ENCODE measurements at regions of chr17 and their contacts with region 1.

Region 1: GRCh38 chr17:57255776-57256681 is at the start of gene MSI2:
- DNase-seq: peak; percentile 76
- H3K4me3 ChIP-seq: peak within 1 kb of the TSS; percentile 65 to 99 (median 68)
- H3K27ac ChIP-seq: peak within 1 kb of the TSS; percentile 61
- H3K4me1 ChIP-seq: peaks cover 18% of the 10 kb centered on the region
- H3K27me3 ChIP-seq: no peaks in the 10 kb centered on the region
- CTCF ChIP-seq: no peak
- total RNA-seq, gene MSI2: 56.5 to 57.0 TPM

Region 2: GRCh38 chr17:57228911-57229310 is 27.1 kb before region 1 on chr17:
- CTCF ChIA-PET with region 1: no interaction called
- dilution Hi-C with region 1: no loop called
- in situ Hi-C with region 1: no loop called
- intact Hi-C with region 1: no loop called
- DNase-seq: no peak
- H3K4me3 ChIP-seq: no peak overlapping the region
- H3K27ac ChIP-seq: no peak overlapping the region
- H3K4me1 ChIP-seq: no peaks in the 10 kb centered on the region
- H3K27me3 ChIP-seq: no peaks in the 10 kb centered on the region
- CTCF ChIP-seq: no peak

Region 3: GRCh38 chr17:57243171-57243948 is 12.7 kb before region 1 on chr17:
- CTCF ChIA-PET with region 1: interaction called, 13 read pairs
- dilution Hi-C with region 1: no loop called
- in situ Hi-C with region 1: no loop called
- intact Hi-C with region 1: no loop called
- DNase-seq: peak; percentile 45
- H3K4me3 ChIP-seq: no peak overlapping the region
- H3K27ac ChIP-seq: no peak overlapping the region
- H3K4me1 ChIP-seq: no peaks in the 10 kb centered on the region
- H3K27me3 ChIP-seq: no peaks in the 10 kb centered on the region
- CTCF ChIP-seq: peak; percentile 100

Region 4: DNA sequence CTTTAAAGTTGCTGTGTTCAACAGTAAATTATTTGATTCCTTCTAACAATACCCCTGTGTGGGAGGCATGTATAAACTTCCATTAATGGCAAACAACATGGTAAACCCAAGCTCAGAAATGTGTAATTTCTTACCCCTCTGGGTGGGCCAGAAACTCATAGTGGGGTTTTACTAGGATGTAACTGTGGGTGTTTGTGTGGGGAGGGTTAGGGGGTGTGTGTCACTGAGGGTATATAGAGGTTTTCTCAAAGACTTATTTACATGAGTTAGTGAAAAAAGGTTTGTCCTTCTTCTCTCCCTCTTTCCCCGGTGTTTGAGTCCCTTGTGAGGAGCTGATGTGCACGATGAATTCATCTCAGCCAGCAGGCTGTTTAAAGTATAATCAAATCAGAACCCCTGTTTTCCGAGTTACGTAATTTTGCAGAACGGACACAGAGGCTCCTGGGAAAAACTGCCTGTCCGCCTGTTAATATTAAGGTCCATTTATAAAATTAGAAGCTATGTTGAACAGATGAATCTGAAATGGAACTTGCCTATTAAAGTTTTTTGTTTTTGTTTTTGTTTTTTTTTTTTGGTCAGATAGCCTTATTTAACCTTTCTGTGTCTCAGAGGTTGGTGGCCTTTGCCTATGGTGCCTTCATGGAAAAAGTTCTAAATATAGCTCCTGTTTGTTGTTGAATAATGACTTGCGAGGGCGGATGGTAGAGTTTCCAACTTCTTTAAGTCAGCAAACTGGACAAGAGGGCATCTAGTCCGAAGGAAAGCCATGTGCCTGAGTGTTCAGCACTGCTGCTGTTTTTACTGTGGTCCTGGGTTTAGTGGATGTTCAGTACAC is 73.6 kb after region 1 on chr17:
- CTCF ChIA-PET with region 1: no interaction called
- dilution Hi-C with region 1: no loop called
- in situ Hi-C with region 1: no loop called
- intact Hi-C with region 1: no loop called
- DNase-seq: no peak
- H3K4me3 ChIP-seq: no peak overlapping the region
- H3K27ac ChIP-seq: no peak overlapping the region
- H3K4me1 ChIP-seq: no peaks in the 10 kb centered on the region
- H3K27me3 ChIP-seq: no peaks in the 10 kb centered on the region
- CTCF ChIP-seq: no peak

Region 5: GRCh38 chr17:57357399-57357807 is 101.4 kb after region 1 on chr17:
- CTCF ChIA-PET with region 1: no interaction called
- dilution Hi-C with region 1: no loop called
- in situ Hi-C with region 1: no loop called
- intact Hi-C with region 1: loop called (anchors 5 kb)
- DNase-seq: peak; percentile 47
- H3K4me3 ChIP-seq: no peak overlapping the region
- H3K27ac ChIP-seq: peak overlapping the region; percentile 1
- H3K4me1 ChIP-seq: peaks cover 19% of the 10 kb centered on the region
- H3K27me3 ChIP-seq: no peaks in the 10 kb centered on the region
- CTCF ChIP-seq: no peak

Region 6: GRCh38 chr17:57401556-57402488 is 145.8 kb after region 1 on chr17:
- CTCF ChIA-PET with region 1: no interaction called
- dilution Hi-C with region 1: no loop called
- in situ Hi-C with region 1: no loop called
- intact Hi-C with region 1: loop called (anchors 5 kb)
- DNase-seq: no peak
- H3K4me3 ChIP-seq: no peak overlapping the region
- H3K27ac ChIP-seq: no peak overlapping the region
- H3K4me1 ChIP-seq: no peaks in the 10 kb centered on the region
- H3K27me3 ChIP-seq: no peaks in the 10 kb centered on the region
- CTCF ChIP-seq: peak; percentile 3 to 19

Region 7: DNA sequence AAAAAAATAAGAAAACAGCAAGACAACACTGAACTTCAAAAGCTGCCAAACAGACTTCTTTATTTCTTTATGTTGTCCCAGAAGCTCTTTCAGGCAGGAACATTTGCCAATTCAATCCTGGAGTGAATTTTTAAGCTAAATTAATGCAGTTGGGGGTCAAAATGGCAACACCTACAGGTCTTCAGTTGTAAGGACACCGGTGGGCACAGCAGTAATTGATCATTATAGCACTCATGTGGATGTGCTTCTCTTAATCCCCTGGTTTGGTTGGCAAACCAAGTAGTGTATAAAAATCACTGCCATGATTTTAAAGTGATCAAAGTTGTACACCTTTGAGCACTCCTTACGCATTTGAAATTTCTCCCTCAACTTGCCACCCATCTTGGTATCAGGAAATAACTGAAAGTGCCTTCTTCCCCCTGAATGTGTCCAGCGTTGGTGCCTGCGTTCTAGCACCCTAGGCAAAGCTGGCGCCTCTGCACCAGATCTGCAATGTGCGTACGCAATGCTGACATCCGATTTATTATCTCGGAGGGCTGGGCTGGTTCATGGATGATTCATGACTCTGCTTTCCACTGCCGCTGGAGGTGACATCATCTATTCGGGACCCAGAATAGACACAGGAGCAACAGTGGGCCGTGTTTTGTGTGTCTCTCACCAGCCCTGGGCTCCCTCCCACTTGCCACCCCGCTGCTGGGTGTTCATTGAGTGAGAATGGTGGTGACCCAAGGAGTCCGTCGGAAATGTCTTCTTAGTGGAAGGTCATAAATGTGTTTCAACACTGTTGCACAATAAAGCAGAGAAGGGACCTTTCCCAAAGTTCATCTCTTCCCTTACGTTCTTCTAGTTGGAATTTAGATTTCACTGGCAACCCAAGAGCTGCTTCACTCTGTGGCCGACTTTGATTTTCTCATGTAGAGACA is 285.7 kb after region 1 on chr17:
- CTCF ChIA-PET with region 1: no interaction called
- dilution Hi-C with region 1: no loop called
- in situ Hi-C with region 1: loop called in 1 of 2 experiments (anchors 25 kb)
- intact Hi-C with region 1: no loop called
- DNase-seq: no peak
- H3K4me3 ChIP-seq: no peak overlapping the region
- H3K27ac ChIP-seq: no peak overlapping the region
- H3K4me1 ChIP-seq: no peaks in the 10 kb centered on the region
- H3K27me3 ChIP-seq: no peaks in the 10 kb centered on the region
- CTCF ChIP-seq: no peak

Region 8: GRCh38 chr17:57597531-57598453 is 341.8 kb after region 1 on chr17:
- CTCF ChIA-PET with region 1: no interaction called
- dilution Hi-C with region 1: no loop called
- in situ Hi-C with region 1: no loop called
- intact Hi-C with region 1: loop called (anchors 5 kb)
- DNase-seq: peak; percentile 49
- H3K4me3 ChIP-seq: no peak overlapping the region
- H3K27ac ChIP-seq: no peak overlapping the region
- H3K4me1 ChIP-seq: peaks cover 2% of the 10 kb centered on the region
- H3K27me3 ChIP-seq: no peaks in the 10 kb centered on the region
- CTCF ChIP-seq: peak; percentile 83 to 85

Region 9: DNA sequence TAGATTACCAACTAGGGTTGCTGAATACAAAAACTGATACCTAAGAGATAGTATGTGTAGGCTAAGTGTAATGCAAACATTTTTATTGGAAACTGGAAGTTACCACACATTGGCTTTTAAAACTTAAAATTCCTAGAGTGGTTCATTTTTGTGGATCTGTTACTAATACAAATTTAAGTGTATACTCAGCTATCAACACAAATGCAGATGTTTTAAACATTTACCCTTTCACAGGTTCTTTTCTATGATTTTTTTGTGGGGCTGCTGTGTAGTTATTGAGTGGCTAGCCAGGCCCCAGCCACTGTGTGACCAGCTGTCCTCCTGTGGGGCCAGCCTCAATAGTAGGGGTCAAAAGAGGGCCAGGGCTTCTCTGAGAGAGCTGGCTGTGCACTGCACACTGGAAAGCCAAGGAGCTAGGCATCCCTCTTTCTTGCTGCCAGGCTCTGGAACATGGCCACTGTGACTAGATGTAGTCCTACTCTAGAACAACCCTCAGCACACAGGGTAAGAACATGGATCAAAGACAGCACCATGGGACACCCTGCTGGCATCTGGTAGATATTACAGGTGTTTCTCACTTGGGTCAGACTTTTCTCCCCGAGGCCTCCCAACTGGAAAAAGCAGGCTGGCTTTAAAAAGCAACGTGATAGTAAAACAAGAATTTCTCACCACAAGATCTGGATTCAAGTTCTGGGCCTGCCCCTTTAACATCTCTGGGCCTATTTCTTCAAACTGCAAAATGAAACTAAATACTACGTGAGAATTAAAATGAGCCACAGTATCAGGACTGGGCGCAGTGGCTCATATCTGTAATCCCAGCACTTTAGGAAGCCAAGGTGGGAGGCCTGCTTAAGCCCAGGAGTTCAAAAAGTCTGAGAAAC is 739.3 kb after region 1 on chr17:
- CTCF ChIA-PET with region 1: no interaction called
- dilution Hi-C with region 1: no loop called
- in situ Hi-C with region 1: no loop called
- intact Hi-C with region 1: loop called (anchors 10 kb)
- DNase-seq: peak; percentile 61
- H3K4me3 ChIP-seq: no peak overlapping the region
- H3K27ac ChIP-seq: no peak overlapping the region
- H3K4me1 ChIP-seq: no peaks in the 10 kb centered on the region
- H3K27me3 ChIP-seq: no peaks in the 10 kb centered on the region
- CTCF ChIP-seq: peak; percentile 69 to 81